GM12878 (cell line): ENCODE measurements at regions of chr7 and their contacts with region 1.

Region 1: GRCh38 chr7:40965745-40966144 is 737.1 kb downstream of the INHBA start:
- DNase-seq: peak; percentile 15
- ATAC-seq: peak; percentile 94
- H3K4me3 ChIP-seq: no peak overlapping the region
- H3K27ac ChIP-seq: no peak overlapping the region
- H3K4me1 ChIP-seq: no peaks in the 10 kb centered on the region
- H3K27me3 ChIP-seq: no peaks in the 10 kb centered on the region
- CTCF ChIP-seq: no peak
- EP300 ChIP-seq: peak; percentile 46 to 62; a peak in 3 of 4 replicates
- POLR2A ChIP-seq: no peak
- RAD21 ChIP-seq: no peak

Region 2: DNA sequence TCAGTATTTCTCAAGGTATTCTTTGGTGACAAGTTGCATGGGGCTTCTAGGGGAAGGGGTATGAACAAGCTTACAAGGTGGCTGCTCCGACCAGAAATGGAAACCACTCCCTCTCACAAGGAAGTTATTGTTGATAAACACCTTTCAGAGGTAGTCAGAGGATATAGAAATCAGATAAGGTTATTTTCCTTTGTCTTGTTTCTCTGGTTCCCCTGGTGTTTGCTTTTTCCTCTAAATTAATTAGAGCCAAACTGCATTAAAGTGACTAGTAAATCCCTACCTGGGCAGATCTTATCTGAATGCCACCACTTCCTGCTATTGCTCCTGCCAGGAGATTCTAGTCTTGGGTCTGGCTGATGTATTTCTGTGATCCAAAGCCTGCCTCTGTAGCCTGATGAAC is 11.8 kb after region 1 on chr7:
- CTCF ChIA-PET with region 1: interaction called, 5 read pairs
- POLR2A ChIA-PET with region 1: no interaction called
- RAD21 ChIA-PET with region 1: no interaction called
- SMC1A ChIA-PET with region 1: interaction called, 14 read pairs
- in situ Hi-C with region 1: no loop called
- intact Hi-C with region 1: no loop called
- DNase-seq: no peak
- ATAC-seq: no peak
- H3K4me3 ChIP-seq: no peak overlapping the region
- H3K27ac ChIP-seq: no peak overlapping the region
- H3K4me1 ChIP-seq: no peaks in the 10 kb centered on the region
- H3K27me3 ChIP-seq: no peaks in the 10 kb centered on the region
- CTCF ChIP-seq: no peak
- EP300 ChIP-seq: no peak
- POLR2A ChIP-seq: no peak
- RAD21 ChIP-seq: no peak

Region 3: DNA sequence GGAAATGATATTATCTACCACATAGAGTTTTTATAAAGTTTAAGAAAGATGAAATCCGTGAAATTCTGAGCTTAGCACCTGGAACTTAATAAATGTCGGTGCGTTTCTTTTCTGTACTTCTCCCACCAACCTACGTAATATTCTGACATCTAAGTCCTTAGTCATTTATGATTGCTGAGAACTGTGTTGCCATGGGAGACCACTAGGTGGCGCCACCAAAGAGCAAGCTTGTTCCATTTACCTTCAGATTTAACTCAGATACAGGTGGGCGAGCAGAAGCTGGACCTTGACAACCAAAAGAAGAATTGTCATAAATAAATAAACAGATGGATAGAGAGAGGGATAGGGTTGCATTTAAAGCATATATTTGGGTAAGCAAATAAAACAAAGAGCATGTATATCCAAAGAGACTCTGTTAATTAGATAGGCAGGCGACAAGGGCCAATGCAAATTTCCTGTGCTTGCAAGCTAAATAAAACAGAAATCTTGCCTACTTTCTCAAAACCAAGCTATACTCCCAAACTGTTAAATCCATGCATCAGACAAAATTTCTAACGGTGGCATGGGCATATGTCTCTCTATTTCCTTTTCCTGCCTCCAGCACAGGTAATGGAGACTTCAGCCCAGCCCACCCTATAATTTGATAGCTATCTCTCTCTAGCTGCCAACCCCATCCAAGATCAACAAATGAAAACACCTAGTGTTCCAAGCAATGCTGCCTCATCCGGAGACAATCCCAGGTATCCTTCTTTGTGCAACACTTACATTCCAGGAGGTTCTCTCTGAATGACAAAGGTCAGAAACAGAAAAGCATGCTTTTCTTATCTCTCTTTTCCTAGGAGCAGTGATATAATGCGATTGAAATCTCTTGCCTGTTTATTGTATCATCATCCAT is 37.5 kb after region 1 on chr7:
- CTCF ChIA-PET with region 1: interaction called, 10 read pairs
- POLR2A ChIA-PET with region 1: no interaction called
- RAD21 ChIA-PET with region 1: no interaction called
- SMC1A ChIA-PET with region 1: interaction called, 4 read pairs
- in situ Hi-C with region 1: no loop called
- intact Hi-C with region 1: no loop called
- DNase-seq: peak; percentile 3
- ATAC-seq: peak; percentile 67
- H3K4me3 ChIP-seq: no peak overlapping the region
- H3K27ac ChIP-seq: no peak overlapping the region
- H3K4me1 ChIP-seq: no peaks in the 10 kb centered on the region
- H3K27me3 ChIP-seq: no peaks in the 10 kb centered on the region; a peak in 1 of 4 replicates
- CTCF ChIP-seq: peak; percentile 69 to 76 (median 71); a peak in 5 of 6 replicates
- EP300 ChIP-seq: no peak
- POLR2A ChIP-seq: no peak
- RAD21 ChIP-seq: peak; percentile 79